ENCODE measurements at regions of chr1 and their contacts with region 1.

Region 1: GRCh38 chr1:111481387-111482221 is 7.8 kb downstream of the C1orf162 start:
- DNase-seq: peak; percentile 67 to 82 (median 76)
- ATAC-seq: peak; percentile 98
- H3K4me3 ChIP-seq: no peak overlapping the region
- H3K27ac ChIP-seq: no peak overlapping the region
- H3K4me1 ChIP-seq: peaks cover 0 to 7% of the 10 kb centered on the region in 2 experiments; a peak in 3 of 5 replicates
- H3K27me3 ChIP-seq: peaks cover 1 to 13% of the 10 kb centered on the region in 2 experiments; a peak in 4 of 5 replicates
- CTCF ChIP-seq: peak; percentile 93 to 98 (median 94)
- EP300 ChIP-seq: no peak; the same call in 1 of the 2 replicates
- POLR2A ChIP-seq: no peak
- RAD21 ChIP-seq: peak; percentile 98

Region 2: GRCh38 chr1:111302374-111302773 is 179.2 kb before region 1 on chr1:
- CTCF ChIA-PET with region 1: no interaction called
- POLR2A ChIA-PET with region 1: no interaction called
- in situ Hi-C with region 1: no loop called
- intact Hi-C with region 1: no loop called
- DNase-seq: no peak
- ATAC-seq: no peak
- H3K4me3 ChIP-seq: no peak overlapping the region
- H3K27ac ChIP-seq: no peak overlapping the region
- H3K4me1 ChIP-seq: no peaks in the 10 kb centered on the region
- H3K27me3 ChIP-seq: no peaks in the 10 kb centered on the region
- CTCF ChIP-seq: no peak
- EP300 ChIP-seq: no peak
- POLR2A ChIP-seq: no peak
- RAD21 ChIP-seq: no peak

Region 3: GRCh38 chr1:111656086-111657017 is 174.7 kb after region 1 on chr1:
- CTCF ChIA-PET with region 1: interaction called, 25 read pairs
- POLR2A ChIA-PET with region 1: no interaction called
- in situ Hi-C with region 1: no loop called
- intact Hi-C with region 1: loop called (anchors 1 kb)
- DNase-seq: peak; percentile 36 to 69 (median 48)
- ATAC-seq: peak; percentile 38; the same call in 2 of the 3 replicates
- H3K4me3 ChIP-seq: no peak overlapping the region
- H3K27ac ChIP-seq: no peak overlapping the region
- H3K4me1 ChIP-seq: peaks cover 5 to 28% of the 10 kb centered on the region in 2 experiments; a peak in 4 of 5 replicates
- H3K27me3 ChIP-seq: no peaks in the 10 kb centered on the region
- CTCF ChIP-seq: peak; percentile 57 to 87 (median 74); a peak in 5 of 6 replicates
- EP300 ChIP-seq: no peak
- POLR2A ChIP-seq: no peak
- RAD21 ChIP-seq: peak; percentile 92 to 96

Region 4: DNA sequence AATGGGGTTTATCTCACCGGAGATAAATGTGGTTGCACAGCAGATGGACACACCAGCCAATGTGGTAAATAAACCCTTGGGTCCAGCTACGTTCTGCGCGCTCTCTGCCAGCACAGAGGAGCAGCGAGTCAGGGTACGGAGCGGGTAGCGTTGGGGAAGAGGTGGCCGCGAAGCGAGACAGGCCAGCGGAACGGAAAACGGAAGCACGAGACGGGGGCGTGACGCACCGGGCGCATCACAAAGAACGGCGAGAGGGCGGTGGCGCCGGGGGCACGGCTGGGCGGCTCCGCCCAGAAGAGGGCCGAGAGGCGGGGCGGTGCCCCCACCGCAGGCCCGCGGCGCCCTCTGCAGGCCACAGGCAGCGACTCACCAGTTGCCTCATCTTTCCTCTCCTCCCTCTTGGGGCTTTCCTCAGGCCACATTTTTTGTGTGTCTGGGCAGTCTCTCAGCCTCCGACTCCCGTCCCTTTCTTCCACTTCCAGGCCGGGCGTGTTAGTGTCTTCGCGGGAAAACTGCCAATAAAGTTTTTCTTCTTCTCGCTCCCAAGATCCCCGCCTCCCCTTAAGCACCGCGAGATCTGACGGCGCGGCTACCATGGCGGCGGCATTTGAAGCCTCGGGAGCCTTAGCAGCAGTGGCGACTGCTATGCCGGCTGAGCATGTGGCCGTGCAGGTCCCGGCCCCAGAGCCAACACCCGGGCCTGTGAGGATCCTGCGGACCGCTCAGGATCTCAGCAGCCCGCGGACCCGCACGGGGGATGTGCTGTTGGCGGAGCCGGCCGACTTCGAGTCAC is 273.9 kb after region 1 on chr1 and contains the start of gene DDX20:
- CTCF ChIA-PET with region 1: interaction called, 5 read pairs
- POLR2A ChIA-PET with region 1: no interaction called
- in situ Hi-C with region 1: loop called (anchors 5 kb)
- intact Hi-C with region 1: no loop called
- DNase-seq: peak; percentile 96 to 99 (median 98)
- ATAC-seq: peak; percentile 94
- H3K4me3 ChIP-seq: peak within 1 kb of the TSS; percentile 87
- H3K27ac ChIP-seq: peak within 1 kb of the TSS; percentile 78
- H3K4me1 ChIP-seq: peaks cover 9 to 15% of the 10 kb centered on the region in 2 experiments
- H3K27me3 ChIP-seq: peaks cover 0 to 2% of the 10 kb centered on the region in 2 experiments; a peak in 2 of 5 replicates
- CTCF ChIP-seq: peak; percentile 92 to 98 (median 97)
- EP300 ChIP-seq: peak; percentile 16; the same call in 1 of the 2 replicates
- POLR2A ChIP-seq: peak; percentile 93
- RAD21 ChIP-seq: peak; percentile 96 to 97
- polyA plus RNA-seq, gene DDX20: 8.3 to 8.5 TPM

Region 5: DNA sequence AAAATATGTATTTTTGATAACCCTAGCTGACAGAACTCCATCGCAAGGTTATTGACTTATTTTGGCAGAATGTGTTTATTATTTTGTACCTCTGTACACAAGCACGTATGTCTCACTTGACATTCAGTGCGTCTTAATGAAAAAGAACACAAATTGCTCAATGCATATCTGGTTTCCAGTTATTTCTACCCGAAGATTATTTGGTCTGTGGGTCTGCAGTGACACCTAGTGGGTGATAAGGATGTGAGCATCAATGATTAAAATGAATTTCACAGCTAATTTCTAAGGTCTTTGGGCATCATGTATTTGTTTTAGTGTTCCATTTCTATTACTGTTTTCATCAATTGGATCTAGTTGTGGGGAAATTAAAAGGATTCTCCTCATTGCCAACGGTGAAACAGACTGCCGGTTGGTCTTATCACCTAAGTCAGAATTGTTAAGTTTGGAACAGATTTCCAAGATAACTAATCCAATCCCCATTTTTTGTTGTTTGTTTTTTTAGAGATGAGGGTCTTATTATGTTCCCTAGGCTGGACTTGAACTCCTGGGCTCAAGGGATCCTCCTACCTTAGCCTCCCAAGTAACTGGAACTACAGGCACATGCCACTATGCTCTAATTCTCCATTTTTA is 288.0 kb after region 1 on chr1:
- CTCF ChIA-PET with region 1: interaction called, 39 read pairs
- POLR2A ChIA-PET with region 1: no interaction called
- in situ Hi-C with region 1: no loop called
- intact Hi-C with region 1: loop called (anchors 1 kb)
- DNase-seq: peak; percentile 65 to 80 (median 68)
- ATAC-seq: peak; percentile 76
- H3K4me3 ChIP-seq: no peak overlapping the region
- H3K27ac ChIP-seq: no peak overlapping the region
- H3K4me1 ChIP-seq: no peaks in the 10 kb centered on the region
- H3K27me3 ChIP-seq: peaks cover 2 to 6% of the 10 kb centered on the region in 2 experiments; a peak in 3 of 5 replicates
- CTCF ChIP-seq: peak; percentile 68 to 96 (median 82)
- EP300 ChIP-seq: no peak
- POLR2A ChIP-seq: no peak; the same call in 1 of the 2 replicates
- RAD21 ChIP-seq: peak; percentile 94 to 95

Region 6: DNA sequence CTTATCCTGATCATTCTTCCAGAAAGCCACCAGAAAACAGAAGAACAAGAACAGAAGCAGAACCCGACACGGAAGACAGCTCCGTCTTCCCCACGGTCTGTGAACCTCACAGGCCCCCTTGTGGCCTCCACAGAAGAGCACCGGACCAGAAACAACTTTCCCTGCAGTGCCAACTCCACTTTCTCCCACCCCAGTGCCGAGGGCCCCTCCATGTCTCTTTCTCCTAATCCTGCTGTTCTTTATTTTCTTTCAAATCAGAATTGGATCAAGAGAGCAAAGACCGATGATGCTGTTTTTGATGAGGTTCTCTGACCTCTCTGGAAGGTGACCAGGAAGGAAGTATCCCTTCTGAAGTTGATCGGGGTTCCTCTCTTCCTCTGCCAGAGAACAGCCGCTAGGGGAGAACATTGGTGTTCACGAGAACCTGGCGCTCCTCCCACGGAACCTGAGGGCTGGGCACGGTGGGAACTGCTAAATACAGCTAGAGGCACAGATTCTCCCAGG is 855.5 kb after region 1 on chr1:
- CTCF ChIA-PET with region 1: interaction called, 4 read pairs
- POLR2A ChIA-PET with region 1: no interaction called
- in situ Hi-C with region 1: loop called (anchors 25 kb)
- intact Hi-C with region 1: no loop called
- DNase-seq: peak; percentile 49 to 67 (median 56)
- ATAC-seq: peak; percentile 96
- H3K4me3 ChIP-seq: no peak overlapping the region
- H3K27ac ChIP-seq: no peak overlapping the region
- H3K4me1 ChIP-seq: no peaks in the 10 kb centered on the region
- H3K27me3 ChIP-seq: peaks cover 0 to 10% of the 10 kb centered on the region in 2 experiments; a peak in 1 of 5 replicates
- CTCF ChIP-seq: peak; percentile 79 to 90 (median 90)
- EP300 ChIP-seq: no peak; the same call in 1 of the 2 replicates
- POLR2A ChIP-seq: no peak
- RAD21 ChIP-seq: peak; percentile 97

Region 7: GRCh38 chr1:112369392-112370285 is 888.0 kb after region 1 on chr1:
- CTCF ChIA-PET with region 1: interaction called, 3 read pairs
- POLR2A ChIA-PET with region 1: no interaction called
- in situ Hi-C with region 1: no loop called
- intact Hi-C with region 1: loop called (anchors 5 kb)
- DNase-seq: peak; percentile 85 to 91 (median 90)
- ATAC-seq: peak; percentile 100
- H3K4me3 ChIP-seq: no peak overlapping the region
- H3K27ac ChIP-seq: no peak overlapping the region
- H3K4me1 ChIP-seq: no peaks in the 10 kb centered on the region
- H3K27me3 ChIP-seq: peaks cover 10 to 13% of the 10 kb centered on the region in 2 experiments
- CTCF ChIP-seq: peak; percentile 99 to 100 (median 100)
- EP300 ChIP-seq: no peak
- POLR2A ChIP-seq: no peak
- RAD21 ChIP-seq: peak; percentile 94 to 99

Measured in K562 (cell line).